ENCODE measurements at regions of chr3 and their contacts with region 1.

Region 1: DNA sequence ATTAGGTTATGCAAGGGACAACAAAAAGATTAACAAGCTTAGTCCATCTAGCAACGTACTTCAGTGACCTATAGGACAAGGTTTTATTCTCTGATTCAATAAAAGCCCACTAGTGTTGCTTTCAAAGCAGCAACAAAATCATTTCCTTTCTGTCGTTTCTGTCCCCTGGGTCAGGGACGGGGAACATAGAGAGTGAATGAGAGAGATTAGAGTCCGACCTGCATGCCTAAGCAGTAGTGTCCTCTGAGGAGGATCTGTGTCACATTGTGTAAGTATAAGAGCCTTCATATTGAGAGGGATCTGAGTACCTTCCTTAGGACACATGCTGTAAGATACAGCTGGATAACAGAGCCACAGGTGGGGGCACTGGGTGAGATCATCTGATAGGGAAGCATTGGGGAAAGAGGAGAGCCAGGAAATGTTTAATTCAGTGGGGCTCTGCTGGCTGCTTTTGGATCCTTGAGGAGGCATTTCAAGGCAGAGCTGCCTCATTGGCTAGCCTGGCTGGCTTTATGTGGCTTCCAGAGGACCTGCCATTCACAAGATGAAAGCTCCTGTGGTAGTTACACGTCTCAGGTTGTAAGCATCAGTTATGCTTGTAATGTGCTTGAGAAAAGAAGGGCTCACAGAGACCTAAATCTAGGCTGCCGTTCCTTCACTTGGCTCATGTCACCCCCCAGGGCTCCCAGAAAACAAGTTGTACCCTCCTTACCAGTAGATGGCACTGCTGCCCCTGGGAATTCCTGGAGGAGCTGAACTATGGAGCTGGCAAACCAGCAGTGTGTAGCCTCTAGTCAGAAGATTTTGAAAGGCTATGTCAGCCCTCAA is 2.7 kb downstream of the TMEM108 start:
- DNase-seq: peak; percentile 66
- CTCF ChIP-seq: peak; percentile 54

Region 2: GRCh38 chr3:133159498-133160475 is 118.9 kb after region 1 on chr3:
- in situ Hi-C with region 1: no loop called
- DNase-seq: no peak
- CTCF ChIP-seq: no peak

Region 3: DNA sequence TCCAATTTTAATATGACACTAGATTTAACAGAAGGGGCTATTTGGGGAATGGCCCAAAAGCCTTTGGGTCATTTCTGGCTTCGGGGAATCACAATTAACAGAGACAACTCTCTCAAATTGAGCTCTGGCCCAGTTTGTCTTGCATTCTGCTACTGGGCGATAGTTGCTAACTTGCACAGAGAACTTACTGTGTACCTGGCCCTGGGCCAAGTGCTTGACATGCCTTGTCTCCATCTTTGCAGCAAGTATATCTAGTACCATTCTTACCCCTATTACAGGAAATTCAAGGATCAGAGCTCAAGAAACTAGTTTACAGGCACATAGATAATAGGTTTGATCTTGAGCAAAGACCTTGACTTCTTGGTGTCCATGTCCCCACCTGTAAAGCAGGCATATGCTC is 173.0 kb after region 1 on chr3:
- in situ Hi-C with region 1: no loop called
- DNase-seq: no peak
- CTCF ChIP-seq: no peak

Region 4: GRCh38 chr3:133384331-133385027 is 343.6 kb after region 1 on chr3:
- in situ Hi-C with region 1: loop called (anchors 25 kb)
- DNase-seq: peak; percentile 71
- CTCF ChIP-seq: peak; percentile 50

Region 5: DNA sequence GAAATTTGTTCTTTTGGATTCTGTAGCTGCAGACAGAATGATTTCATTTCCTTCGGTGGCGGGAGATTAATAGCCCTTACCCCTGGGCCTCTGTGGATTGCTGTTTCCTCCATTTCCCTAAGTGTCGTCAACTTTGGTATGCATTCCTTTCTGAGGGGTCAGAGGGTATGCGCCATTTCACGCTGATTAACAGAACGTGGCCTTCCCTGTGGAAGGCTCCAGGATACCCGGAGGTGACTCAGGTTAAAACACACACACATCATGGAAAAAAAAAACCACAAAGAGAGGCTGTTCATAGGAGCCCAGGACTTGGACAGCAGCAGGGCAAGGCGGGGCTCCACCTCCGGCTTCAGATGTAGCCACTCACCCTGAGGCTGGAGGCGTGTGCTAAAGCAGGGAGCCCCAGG is 1806.0 kb after region 1 on chr3:
- in situ Hi-C with region 1: no loop called
- DNase-seq: no peak
- CTCF ChIP-seq: no peak

Measured in GM13976 (cell line).